ENCODE measurements at regions of chr18 and their contacts with region 1.

Region 1: GRCh38 chr18:46173393-46174341 is 69.5 kb downstream of the HAUS1 start:
- DNase-seq: peak; percentile 90 to 95
- ATAC-seq: peak; percentile 85 to 97 (median 92)
- H3K4me3 ChIP-seq: peak overlapping the region; percentile 95
- H3K4me3 Mint-ChIP-seq: peak overlapping the region; percentile 100
- H3K27ac ChIP-seq: peak overlapping the region; percentile 80
- H3K27ac Mint-ChIP-seq: peak overlapping the region; percentile 96 to 99
- H3K4me1 ChIP-seq: peaks cover 28% of the 10 kb centered on the region
- H3K4me1 Mint-ChIP-seq: peaks cover 30 to 39% of the 10 kb centered on the region in 2 donors
- H3K27me3 ChIP-seq: no peaks in the 10 kb centered on the region
- H3K27me3 Mint-ChIP-seq: no peaks in the 10 kb centered on the region
- CTCF ChIP-seq: peak; percentile 94

Region 2: GRCh38 chr18:46013484-46014189 is 160.0 kb before region 1 on chr18:
- intact Hi-C with region 1: no loop called
- DNase-seq: no peak
- ATAC-seq: no peak
- H3K4me3 ChIP-seq: no peak overlapping the region
- H3K4me3 Mint-ChIP-seq: no peak overlapping the region
- H3K27ac ChIP-seq: no peak overlapping the region
- H3K27ac Mint-ChIP-seq: no peak overlapping the region
- H3K4me1 ChIP-seq: peaks cover 5% of the 10 kb centered on the region
- H3K4me1 Mint-ChIP-seq: peaks cover 12 to 18% of the 10 kb centered on the region in 2 donors
- H3K27me3 ChIP-seq: no peaks in the 10 kb centered on the region
- H3K27me3 Mint-ChIP-seq: no peaks in the 10 kb centered on the region
- CTCF ChIP-seq: no peak

Region 3: DNA sequence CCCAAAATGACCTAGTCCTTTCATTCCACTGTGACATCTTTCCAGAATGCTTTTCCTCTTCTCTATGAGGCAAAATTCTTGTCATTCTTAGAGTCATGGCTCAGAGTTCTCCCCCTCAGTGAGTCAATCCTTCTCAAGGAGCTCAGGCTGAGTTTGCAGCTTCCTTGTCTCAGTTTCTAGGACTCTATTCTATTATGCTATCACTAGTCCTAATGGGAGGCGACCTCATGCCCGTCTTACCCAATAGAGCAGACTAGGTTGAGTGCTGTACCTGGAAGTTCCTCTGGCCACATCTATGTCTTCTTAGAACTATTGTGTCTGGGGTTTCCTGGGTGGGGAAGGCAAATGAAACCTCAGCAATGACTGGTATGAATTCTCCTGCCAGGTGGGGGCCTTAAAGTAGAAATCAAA is 18.0 kb before region 1 on chr18:
- intact Hi-C with region 1: no loop called
- DNase-seq: peak in 1 of 2 donors; percentile 68
- ATAC-seq: peak in 2 of 3 donors; percentile 64 to 80
- H3K4me3 ChIP-seq: no peak overlapping the region
- H3K4me3 Mint-ChIP-seq: peak overlapping the region; percentile 77
- H3K27ac ChIP-seq: no peak overlapping the region
- H3K27ac Mint-ChIP-seq: peak overlapping the region; percentile 73 to 80
- H3K4me1 ChIP-seq: peaks cover 32% of the 10 kb centered on the region
- H3K4me1 Mint-ChIP-seq: peaks cover 32 to 51% of the 10 kb centered on the region in 2 donors
- H3K27me3 ChIP-seq: no peaks in the 10 kb centered on the region
- H3K27me3 Mint-ChIP-seq: no peaks in the 10 kb centered on the region
- CTCF ChIP-seq: no peak

Region 4: GRCh38 chr18:46204143-46204542 is 30.5 kb after region 1 on chr18:
- intact Hi-C with region 1: loop called (anchors 2 kb)
- DNase-seq: no peak
- ATAC-seq: no peak
- H3K4me3 ChIP-seq: no peak overlapping the region
- H3K4me3 Mint-ChIP-seq: peak overlapping the region; percentile 43
- H3K27ac ChIP-seq: peak overlapping the region; percentile 8
- H3K27ac Mint-ChIP-seq: peak overlapping the region; percentile 48 to 78
- H3K4me1 ChIP-seq: peaks cover 9% of the 10 kb centered on the region
- H3K4me1 Mint-ChIP-seq: peaks cover 60 to 75% of the 10 kb centered on the region in 2 donors
- H3K27me3 ChIP-seq: no peaks in the 10 kb centered on the region
- H3K27me3 Mint-ChIP-seq: no peaks in the 10 kb centered on the region
- CTCF ChIP-seq: no peak

Region 5: DNA sequence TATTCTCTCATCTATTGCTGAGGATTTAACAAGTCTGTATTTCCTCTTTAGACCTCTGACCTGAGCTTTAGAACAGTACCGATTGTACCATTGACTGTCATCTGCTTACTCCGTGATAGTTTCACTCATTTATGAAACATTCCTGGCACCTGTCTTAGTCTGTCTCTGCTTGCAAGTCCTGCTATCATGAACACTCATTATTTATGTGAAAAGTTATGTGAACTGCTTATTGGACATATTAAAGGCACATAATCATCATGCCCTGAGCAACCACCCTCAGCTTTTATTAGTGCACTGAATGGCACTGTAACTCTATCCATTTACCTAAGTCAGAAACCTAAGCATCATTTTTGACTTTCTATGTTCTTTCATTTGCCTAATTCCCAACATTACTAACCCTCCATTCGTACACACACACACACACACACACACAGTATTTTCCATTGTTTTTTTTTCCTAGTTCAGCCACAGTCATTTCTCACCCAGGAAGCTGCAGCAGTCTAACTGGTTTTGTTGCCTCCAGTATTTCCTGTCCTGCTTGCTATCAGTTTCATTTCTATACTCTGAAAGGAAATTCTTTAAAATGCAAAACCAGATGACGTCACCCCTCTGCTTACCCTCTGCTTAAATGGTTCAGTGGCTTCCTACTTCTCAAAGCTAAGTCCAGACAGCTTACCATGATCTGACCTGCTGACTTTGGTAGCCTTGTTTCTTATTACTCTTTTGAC is 76.6 kb after region 1 on chr18:
- intact Hi-C with region 1: loop called (anchors 1 kb)
- DNase-seq: peak; percentile 20 to 91
- ATAC-seq: peak; percentile 93 to 95 (median 94)
- H3K4me3 ChIP-seq: peak overlapping the region; percentile 11
- H3K4me3 Mint-ChIP-seq: peak overlapping the region; percentile 83
- H3K27ac ChIP-seq: peak overlapping the region; percentile 96
- H3K27ac Mint-ChIP-seq: peak overlapping the region; percentile 91 to 95
- H3K4me1 ChIP-seq: peaks cover 17% of the 10 kb centered on the region
- H3K4me1 Mint-ChIP-seq: peaks cover 34 to 35% of the 10 kb centered on the region in 2 donors
- H3K27me3 ChIP-seq: no peaks in the 10 kb centered on the region
- H3K27me3 Mint-ChIP-seq: no peaks in the 10 kb centered on the region
- CTCF ChIP-seq: no peak

Region 6: GRCh38 chr18:46398625-46399024 is 225.0 kb after region 1 on chr18:
- intact Hi-C with region 1: loop called (anchors 5 kb)
- DNase-seq: no peak
- ATAC-seq: peak in 1 of 3 donors; percentile 10
- H3K4me3 ChIP-seq: no peak overlapping the region
- H3K4me3 Mint-ChIP-seq: peak overlapping the region; percentile 30
- H3K27ac ChIP-seq: peak overlapping the region; percentile 77
- H3K27ac Mint-ChIP-seq: peak overlapping the region; percentile 83 to 95
- H3K4me1 ChIP-seq: peaks cover 81% of the 10 kb centered on the region
- H3K4me1 Mint-ChIP-seq: peaks cover 90 to 97% of the 10 kb centered on the region in 2 donors
- H3K27me3 ChIP-seq: no peaks in the 10 kb centered on the region
- H3K27me3 Mint-ChIP-seq: no peaks in the 10 kb centered on the region
- CTCF ChIP-seq: no peak